Activated CD4-positive, alpha-beta T cell treated with anti-CD3 and anti-CD28 coated beads for 36 hours (primary cell): ENCODE measurements at regions of chr1 and their contacts with region 1.

Region 1: DNA sequence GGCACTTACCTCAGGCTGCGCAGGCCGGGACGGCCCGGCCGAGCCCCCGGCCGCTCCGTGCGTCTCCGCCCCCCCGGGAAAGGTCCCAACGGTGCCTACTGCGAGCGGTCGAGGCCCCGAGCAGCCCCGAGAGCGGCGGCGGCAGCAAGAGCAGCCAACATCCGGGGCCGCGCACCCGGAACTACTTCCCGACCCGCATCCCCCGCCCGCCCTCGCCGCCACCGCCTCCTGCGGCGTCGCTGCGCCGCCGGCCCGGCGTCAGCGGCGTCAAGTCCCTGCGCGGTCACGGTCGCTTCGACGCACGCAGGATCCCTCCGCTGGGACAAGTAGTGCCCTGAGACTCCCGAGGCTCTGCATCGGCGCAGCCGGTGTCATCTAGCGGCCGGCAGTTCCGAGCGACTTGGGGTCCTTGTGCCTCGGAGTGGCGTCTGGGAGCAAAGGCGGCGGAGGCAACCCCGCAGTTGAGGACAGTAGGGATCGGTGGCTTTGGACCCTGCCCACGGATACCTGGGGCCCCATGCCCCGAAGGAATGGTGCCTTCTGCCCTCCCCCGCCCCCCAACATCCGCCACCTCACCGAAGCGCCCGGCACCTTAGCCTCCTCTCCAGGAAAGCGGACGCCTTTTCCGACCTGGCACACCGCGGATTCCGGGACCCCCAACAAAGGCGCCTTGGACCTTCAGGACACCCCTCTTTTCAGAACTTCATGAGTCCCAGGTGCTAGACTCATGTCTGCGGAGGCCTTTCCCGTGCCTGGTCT is at the start of gene FOXJ3:
- DNase-seq: peak; percentile 97
- ATAC-seq: peak; percentile 89
- H3K4me3 Mint-ChIP-seq: peak within 1 kb of the TSS; percentile 92
- H3K27ac Mint-ChIP-seq: peak within 1 kb of the TSS; percentile 89
- H3K4me1 Mint-ChIP-seq: peaks cover 41% of the 10 kb centered on the region
- H3K27me3 Mint-ChIP-seq: no peaks in the 10 kb centered on the region
- total RNA-seq, gene FOXJ3: 44.1 to 54.0 TPM

Region 2: DNA sequence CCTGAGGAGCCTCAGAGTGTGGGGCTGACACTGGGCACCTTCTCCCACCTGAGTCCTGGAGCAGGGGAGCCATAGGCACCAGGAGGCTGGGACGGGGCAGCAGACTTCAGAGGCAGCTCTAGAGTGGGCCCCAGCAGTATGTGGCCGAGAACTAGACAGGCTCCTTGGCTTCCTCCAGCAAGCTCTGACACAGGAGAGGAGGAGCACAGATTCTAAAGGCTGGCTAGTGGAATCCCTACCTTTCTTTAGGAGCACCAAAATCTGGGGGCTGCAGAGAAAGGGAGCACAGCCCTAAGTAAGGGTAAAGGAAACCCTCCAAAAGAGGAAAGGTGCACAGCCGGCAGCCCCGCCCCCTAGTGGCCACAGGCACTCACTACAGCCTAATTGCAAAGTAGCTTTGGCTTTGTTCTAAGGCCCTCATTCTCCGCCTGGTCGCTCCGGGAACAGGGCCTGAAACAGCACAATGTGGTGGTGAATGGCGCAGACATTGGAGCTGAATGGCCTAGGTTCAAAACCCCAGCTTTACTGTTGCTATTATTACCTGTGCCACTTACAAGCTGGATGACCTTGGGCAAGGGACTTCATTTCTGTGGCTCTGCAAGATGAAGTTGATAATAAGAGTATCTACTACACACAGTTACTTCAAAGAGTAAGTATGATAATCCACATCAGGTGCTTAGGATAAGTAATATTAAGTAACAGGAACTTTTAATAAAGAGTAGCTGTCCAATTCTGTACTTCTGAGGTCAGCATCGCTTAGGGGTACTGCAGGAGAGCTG is 161.9 kb before region 1 on chr1:
- CTCF ChIA-PET with region 1: interaction called, 4 read pairs
- POLR2A ChIA-PET with region 1: no interaction called
- intact Hi-C with region 1: loop called (anchors 5 to 10 kb)
- DNase-seq: peak; percentile 81
- ATAC-seq: peak; percentile 82
- H3K4me3 Mint-ChIP-seq: no peak overlapping the region
- H3K27ac Mint-ChIP-seq: no peak overlapping the region
- H3K4me1 Mint-ChIP-seq: no peaks in the 10 kb centered on the region
- H3K27me3 Mint-ChIP-seq: peaks cover 3% of the 10 kb centered on the region

Region 3: GRCh38 chr1:42456010-42456758 is 121.0 kb after region 1 on chr1 and contains the starts of genes PPCS and ZMYND12:
- CTCF ChIA-PET with region 1: no interaction called
- POLR2A ChIA-PET with region 1: no interaction called
- intact Hi-C with region 1: loop called (anchors 1 kb)
- DNase-seq: peak; percentile 97
- ATAC-seq: peak; percentile 92
- H3K4me3 Mint-ChIP-seq: peak within 1 kb of the TSS; percentile 80
- H3K27ac Mint-ChIP-seq: peak within 1 kb of the TSS; percentile 99
- H3K4me1 Mint-ChIP-seq: peaks cover 27% of the 10 kb centered on the region
- H3K27me3 Mint-ChIP-seq: no peaks in the 10 kb centered on the region
- total RNA-seq, gene PPCS: 47.3 to 47.6 TPM
- total RNA-seq, gene ZMYND12: 0.64 to 1.6 TPM

Region 4: GRCh38 chr1:42504535-42505128 is 169.4 kb after region 1 on chr1:
- CTCF ChIA-PET with region 1: no interaction called
- POLR2A ChIA-PET with region 1: no interaction called
- intact Hi-C with region 1: no loop called
- DNase-seq: no peak
- ATAC-seq: no peak
- H3K4me3 Mint-ChIP-seq: no peak overlapping the region
- H3K27ac Mint-ChIP-seq: no peak overlapping the region
- H3K4me1 Mint-ChIP-seq: no peaks in the 10 kb centered on the region
- H3K27me3 Mint-ChIP-seq: no peaks in the 10 kb centered on the region

Region 5: DNA sequence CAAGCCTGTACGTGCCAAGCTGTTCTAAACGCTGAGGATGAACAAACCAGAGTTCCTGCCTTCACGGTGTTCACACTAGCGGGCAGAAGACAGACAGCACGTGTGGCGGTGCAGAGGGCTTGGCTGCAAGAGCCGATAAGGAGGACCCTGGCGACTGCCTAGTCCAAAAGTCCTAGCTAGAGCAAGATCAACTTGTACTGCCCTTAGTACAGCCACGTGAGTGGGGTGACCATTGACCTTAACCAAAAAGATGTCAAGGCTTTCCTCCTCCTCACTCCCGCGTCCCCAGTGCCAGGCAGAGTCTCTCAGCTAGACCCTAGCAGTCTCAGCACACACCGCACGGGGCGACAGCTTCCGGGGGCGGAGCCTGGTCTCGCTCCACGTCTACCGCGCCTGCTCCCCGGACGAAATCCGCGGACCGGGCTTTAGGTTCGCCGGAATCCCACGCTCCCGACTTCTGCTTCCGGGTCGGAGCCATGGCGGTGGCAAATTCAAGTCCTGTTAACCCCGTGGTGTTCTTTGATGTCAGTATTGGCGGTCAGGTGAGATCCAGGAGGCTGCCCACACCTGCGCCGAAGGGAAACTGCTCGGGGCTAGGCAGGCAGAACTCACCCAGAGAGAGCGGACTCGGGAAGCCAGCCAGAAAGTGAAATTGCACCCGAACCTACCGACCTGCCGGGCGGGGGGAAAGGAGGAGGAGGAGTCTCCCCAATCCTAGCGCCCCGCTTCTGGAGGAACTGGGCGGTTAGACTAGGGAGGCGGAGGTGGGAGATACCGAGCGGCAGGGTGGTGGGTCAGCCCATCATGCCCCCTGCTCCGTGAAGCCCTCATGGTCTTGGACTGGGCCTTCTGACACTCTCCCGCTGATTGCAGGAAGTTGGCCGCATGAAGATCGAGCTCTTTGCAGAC is 323.0 kb after region 1 on chr1 and contains the start of gene PPIH:
- CTCF ChIA-PET with region 1: no interaction called
- POLR2A ChIA-PET with region 1: no interaction called
- intact Hi-C with region 1: loop called in 1 of 2 experiments (anchors 1 kb)
- DNase-seq: peak; percentile 98
- ATAC-seq: peak; percentile 97
- H3K4me3 Mint-ChIP-seq: peak within 1 kb of the TSS; percentile 97
- H3K27ac Mint-ChIP-seq: peak within 1 kb of the TSS; percentile 97
- H3K4me1 Mint-ChIP-seq: peaks cover 39% of the 10 kb centered on the region
- H3K27me3 Mint-ChIP-seq: no peaks in the 10 kb centered on the region
- total RNA-seq, gene PPIH: 111 to 114 TPM

Region 6: DNA sequence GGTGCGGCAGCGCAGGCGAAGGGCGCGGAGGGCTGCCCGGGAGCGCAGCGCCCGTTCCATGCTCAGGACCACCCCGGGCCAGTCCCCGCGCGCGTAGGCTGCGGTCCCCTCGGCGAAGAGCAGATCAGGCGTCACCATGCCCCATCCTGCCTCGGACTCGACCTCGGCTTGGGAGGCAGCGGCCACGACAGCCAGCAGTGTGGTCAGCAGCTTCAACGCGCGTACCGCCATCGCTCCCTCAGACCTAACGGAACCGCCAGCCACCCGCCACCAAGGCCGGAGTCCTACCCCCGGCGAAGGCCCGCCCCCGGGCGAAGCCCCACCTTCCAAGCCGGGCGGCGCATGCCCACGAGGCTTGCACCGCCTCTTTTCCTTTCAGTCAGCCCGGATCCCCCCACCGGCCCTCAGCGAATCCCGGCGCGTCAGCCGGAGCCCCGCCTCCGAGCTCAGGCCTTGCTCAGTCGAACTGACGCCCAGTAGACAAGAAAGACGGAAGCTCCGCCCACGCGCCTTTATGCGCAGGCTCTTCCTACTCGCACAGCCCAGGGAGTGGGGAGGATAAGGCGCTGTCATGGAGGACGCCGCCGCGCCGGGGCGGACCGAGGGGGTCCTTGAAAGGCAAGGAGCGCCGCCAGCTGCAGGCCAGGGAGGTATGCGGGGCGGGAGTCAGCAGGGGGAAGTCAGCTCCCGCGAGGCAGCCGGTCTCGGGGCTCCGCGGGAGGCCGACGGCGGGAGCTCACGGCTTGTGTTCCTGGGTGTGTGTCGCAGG is 431.7 kb after region 1 on chr1 and contains the starts of genes C1orf50 and P3H1:
- CTCF ChIA-PET with region 1: no interaction called
- POLR2A ChIA-PET with region 1: no interaction called
- intact Hi-C with region 1: loop called in 1 of 2 experiments (anchors 1 kb)
- DNase-seq: peak; percentile 100
- ATAC-seq: peak; percentile 96
- H3K4me3 Mint-ChIP-seq: no peak within 1 kb of the TSS
- H3K27ac Mint-ChIP-seq: peak within 1 kb of the TSS; percentile 85
- H3K4me1 Mint-ChIP-seq: peaks cover 36% of the 10 kb centered on the region
- H3K27me3 Mint-ChIP-seq: no peaks in the 10 kb centered on the region
- total RNA-seq, gene C1orf50: 4.0 to 8.0 TPM
- total RNA-seq, gene P3H1: 24.3 to 28.8 TPM

Region 7: GRCh38 chr1:42958488-42959319 is 623.5 kb after region 1 on chr1 and contains the start of gene SLC2A1:
- CTCF ChIA-PET with region 1: no interaction called
- POLR2A ChIA-PET with region 1: no interaction called
- intact Hi-C with region 1: loop called in 1 of 2 experiments (anchors 1 kb)
- DNase-seq: peak; percentile 99
- ATAC-seq: peak; percentile 89
- H3K4me3 Mint-ChIP-seq: peak within 1 kb of the TSS; percentile 89
- H3K27ac Mint-ChIP-seq: peak within 1 kb of the TSS; percentile 97
- H3K4me1 Mint-ChIP-seq: peaks cover 47% of the 10 kb centered on the region
- H3K27me3 Mint-ChIP-seq: peaks cover 6% of the 10 kb centered on the region
- total RNA-seq, gene SLC2A1: 115 to 125 TPM